Naive thymus-derived CD4-positive, alpha-beta T cell (primary cell): ENCODE measurements at regions of chr1 and their contacts with region 1.

Region 1: GRCh38 chr1:9823943-9824701 is at the start of gene CLSTN1:
- DNase-seq: peak; percentile 73 to 88 (median 84)
- ATAC-seq: peak; percentile 86
- H3K4me3 ChIP-seq: peak within 1 kb of the TSS; percentile 82
- H3K4me3 Mint-ChIP-seq: peak within 1 kb of the TSS; percentile 95 to 99 (median 98)
- H3K27ac ChIP-seq: peak within 1 kb of the TSS; percentile 68
- H3K27ac Mint-ChIP-seq: peak within 1 kb of the TSS; percentile 80 to 97 (median 93)
- H3K4me1 ChIP-seq: peaks cover 24 to 34% of the 10 kb centered on the region in 2 donors
- H3K4me1 Mint-ChIP-seq: peaks cover 31 to 52% (median 46%) of the 10 kb centered on the region in 7 donors
- H3K27me3 ChIP-seq: no peaks in the 10 kb centered on the region
- H3K27me3 Mint-ChIP-seq: peaks cover 0 to 3% (median 0%) of the 10 kb centered on the region in 5 donors
- total RNA-seq, gene CLSTN1: 68.6 to 116 (median 85.6) TPM

Region 2: DNA sequence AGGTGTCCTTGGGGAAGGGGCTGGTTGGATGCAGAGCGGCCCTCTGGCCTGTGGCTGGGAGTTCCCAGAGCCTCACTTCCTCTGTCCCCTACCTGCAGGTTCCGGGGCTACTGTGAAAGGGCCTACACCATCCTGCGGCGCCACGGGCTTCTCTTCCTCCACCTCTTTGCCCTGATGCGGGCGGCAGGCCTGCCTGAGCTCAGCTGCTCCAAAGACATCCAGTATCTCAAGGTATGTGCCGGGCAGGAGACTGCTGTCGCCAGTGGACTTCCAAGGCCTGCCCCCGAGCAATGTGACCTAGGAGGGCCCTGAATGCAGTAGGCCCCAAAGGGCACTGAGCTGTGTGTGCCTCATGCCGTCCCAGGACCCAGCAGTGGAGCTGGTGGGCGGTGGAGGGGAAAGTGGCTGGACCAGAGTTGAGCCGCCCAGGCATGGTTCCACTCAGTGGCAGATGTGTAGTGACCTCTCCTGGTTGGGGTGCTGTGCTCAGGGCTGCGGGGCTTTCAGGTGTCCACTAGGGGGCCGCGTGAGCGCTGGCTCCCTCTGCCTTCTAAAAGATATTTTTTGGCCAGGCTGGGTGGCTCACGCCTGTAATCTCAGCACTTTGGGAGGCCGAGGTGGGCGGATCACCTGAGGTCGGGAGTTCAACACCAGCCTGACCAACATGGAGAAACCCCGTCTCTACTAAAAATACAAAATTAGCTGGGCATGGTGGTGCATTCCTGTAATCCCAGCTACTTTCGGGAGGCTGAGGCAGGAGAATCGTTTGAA is 99.2 kb before region 1 on chr1:
- CTCF ChIA-PET with region 1: no interaction called
- POLR2A ChIA-PET with region 1: interaction called, 4 read pairs
- intact Hi-C with region 1: loop called in 1 of 2 experiments (anchors 2 kb)
- DNase-seq: peak; percentile 58 to 72 (median 64)
- ATAC-seq: peak; percentile 65
- H3K4me3 ChIP-seq: no peak overlapping the region
- H3K4me3 Mint-ChIP-seq: peak overlapping the region in 8 of 10 donors; percentile 14 to 68 (median 62)
- H3K27ac ChIP-seq: peak overlapping the region; percentile 51
- H3K27ac Mint-ChIP-seq: peak overlapping the region; percentile 73 to 88 (median 80)
- H3K4me1 ChIP-seq: peaks cover 36 to 83% of the 10 kb centered on the region in 2 donors
- H3K4me1 Mint-ChIP-seq: peaks cover 38 to 84% (median 60%) of the 10 kb centered on the region in 7 donors
- H3K27me3 ChIP-seq: no peaks in the 10 kb centered on the region
- H3K27me3 Mint-ChIP-seq: no peaks in the 10 kb centered on the region

Region 3: GRCh38 chr1:9784508-9785133 is 39.5 kb before region 1 on chr1:
- CTCF ChIA-PET with region 1: no interaction called
- POLR2A ChIA-PET with region 1: interaction called, 4 read pairs
- intact Hi-C with region 1: loop called (anchors 1 kb)
- DNase-seq: peak; percentile 29 to 78 (median 71)
- ATAC-seq: peak; percentile 65
- H3K4me3 ChIP-seq: no peak overlapping the region
- H3K4me3 Mint-ChIP-seq: peak overlapping the region in 2 of 10 donors; percentile 28 to 38
- H3K27ac ChIP-seq: no peak overlapping the region
- H3K27ac Mint-ChIP-seq: peak overlapping the region in 5 of 9 donors; percentile 23 to 76 (median 49)
- H3K4me1 ChIP-seq: peaks cover 11 to 17% of the 10 kb centered on the region in 2 donors
- H3K4me1 Mint-ChIP-seq: peaks cover 11 to 41% (median 32%) of the 10 kb centered on the region in 7 donors
- H3K27me3 ChIP-seq: no peaks in the 10 kb centered on the region
- H3K27me3 Mint-ChIP-seq: no peaks in the 10 kb centered on the region

Region 4: GRCh38 chr1:9798236-9799130 is 25.6 kb before region 1 on chr1:
- CTCF ChIA-PET with region 1: no interaction called
- POLR2A ChIA-PET with region 1: no interaction called
- intact Hi-C with region 1: loop called (anchors 1 to 2 kb)
- DNase-seq: no peak
- ATAC-seq: no peak
- H3K4me3 ChIP-seq: no peak overlapping the region
- H3K4me3 Mint-ChIP-seq: peak overlapping the region; percentile 14 to 64 (median 30)
- H3K27ac ChIP-seq: no peak overlapping the region
- H3K27ac Mint-ChIP-seq: peak overlapping the region; percentile 9 to 87 (median 68)
- H3K4me1 ChIP-seq: peaks cover 9 to 25% of the 10 kb centered on the region in 2 donors
- H3K4me1 Mint-ChIP-seq: peaks cover 48 to 84% (median 73%) of the 10 kb centered on the region in 7 donors
- H3K27me3 ChIP-seq: no peaks in the 10 kb centered on the region
- H3K27me3 Mint-ChIP-seq: no peaks in the 10 kb centered on the region

Region 5: DNA sequence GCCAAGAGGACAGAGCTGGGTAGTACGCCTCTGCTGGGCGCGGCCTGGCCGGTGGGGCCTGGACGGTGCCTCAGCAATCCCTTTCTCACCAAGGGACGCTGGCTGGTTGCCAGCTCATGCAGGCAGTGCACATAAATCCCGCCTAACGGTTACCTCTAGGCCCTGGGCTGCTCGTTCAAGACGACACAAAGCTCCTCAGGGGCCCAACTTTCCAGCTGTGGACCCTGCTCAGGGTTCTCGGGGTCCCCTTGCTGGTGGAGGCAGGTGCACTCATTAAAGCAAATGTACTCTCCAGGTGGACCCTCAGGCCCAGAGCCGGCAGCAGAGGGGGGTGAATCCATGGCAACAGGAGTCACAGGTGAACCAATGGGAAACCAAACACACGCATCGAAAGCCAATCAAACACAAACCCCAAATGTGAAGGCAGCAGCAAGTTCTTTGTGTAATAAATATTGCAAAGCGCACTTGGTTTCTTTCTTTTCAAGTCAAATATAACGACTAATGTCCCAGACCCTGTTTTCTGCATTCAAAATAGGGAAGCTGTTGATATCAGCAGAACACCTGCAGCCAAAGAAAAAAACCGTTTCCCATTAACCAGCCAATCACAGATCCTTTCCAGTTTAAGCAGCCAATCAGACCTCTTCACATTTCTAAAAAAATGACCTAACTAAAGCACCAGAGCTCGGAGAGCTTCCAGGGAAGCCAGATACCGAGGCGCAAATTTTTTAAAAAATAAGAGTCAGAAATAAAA is 25.7 kb after region 1 on chr1:
- CTCF ChIA-PET with region 1: interaction called, 3 read pairs
- POLR2A ChIA-PET with region 1: interaction called, 6 read pairs
- intact Hi-C with region 1: loop called in 1 of 2 experiments (anchors 2 kb)
- DNase-seq: peak in 7 of 9 donors; percentile 57 to 76 (median 64)
- ATAC-seq: peak; percentile 80
- H3K4me3 ChIP-seq: peak overlapping the region; percentile 27
- H3K4me3 Mint-ChIP-seq: peak overlapping the region; percentile 74 to 92 (median 84)
- H3K27ac ChIP-seq: no peak overlapping the region
- H3K27ac Mint-ChIP-seq: peak overlapping the region in 6 of 9 donors; percentile 1 to 87 (median 54)
- H3K4me1 ChIP-seq: peaks cover 0 to 5% of the 10 kb centered on the region in 2 donors
- H3K4me1 Mint-ChIP-seq: peaks cover 6 to 14% (median 10%) of the 10 kb centered on the region in 7 donors
- H3K27me3 ChIP-seq: no peaks in the 10 kb centered on the region
- H3K27me3 Mint-ChIP-seq: peaks cover 0 to 9% (median 0%) of the 10 kb centered on the region in 5 donors

Region 6: DNA sequence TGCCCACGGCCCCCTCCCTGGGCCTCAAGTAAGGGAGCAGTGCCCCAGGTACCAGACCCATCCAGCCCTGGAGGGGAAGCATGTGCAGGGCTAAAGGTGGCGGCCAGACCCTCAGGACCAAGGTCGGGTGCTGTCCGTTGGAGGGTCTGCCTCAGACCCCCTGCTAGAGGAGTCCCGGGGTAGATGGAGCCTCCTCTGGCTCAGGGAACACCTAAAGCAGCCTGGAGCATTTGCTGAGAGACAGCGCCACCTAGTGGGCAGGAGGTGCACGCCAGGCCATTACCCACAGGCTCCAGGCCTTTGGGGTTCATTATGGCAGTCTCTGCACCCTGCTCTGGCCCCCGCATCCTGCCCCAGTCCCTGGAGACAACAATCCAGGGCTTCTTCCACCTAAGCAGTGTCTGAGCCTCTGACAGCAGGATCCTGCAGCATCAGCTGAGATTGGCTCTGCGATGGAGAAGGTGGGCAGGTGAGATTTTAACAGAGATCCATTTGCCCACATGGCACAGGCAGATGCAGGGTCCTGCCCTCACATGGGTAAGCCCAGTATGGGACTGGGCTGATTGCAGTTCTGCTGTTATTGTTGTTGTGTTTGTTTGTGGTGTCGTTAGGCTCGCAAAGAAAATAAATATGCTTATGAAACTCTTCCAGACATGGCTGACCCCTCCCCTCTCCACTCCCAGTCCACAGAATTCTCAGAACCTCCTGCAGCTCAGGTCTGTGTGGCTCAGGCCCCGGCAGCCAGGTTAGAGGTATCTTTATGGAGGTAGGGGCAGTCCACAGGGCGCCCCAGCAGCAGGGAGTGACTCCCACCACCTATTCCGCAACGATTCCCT is 43.5 kb after region 1 on chr1:
- CTCF ChIA-PET with region 1: interaction called, 3 read pairs
- POLR2A ChIA-PET with region 1: no interaction called
- intact Hi-C with region 1: loop called (anchors 1 to 2 kb)
- DNase-seq: peak; percentile 70 to 90 (median 84)
- ATAC-seq: peak; percentile 96
- H3K4me3 ChIP-seq: no peak overlapping the region
- H3K4me3 Mint-ChIP-seq: no peak overlapping the region
- H3K27ac ChIP-seq: no peak overlapping the region
- H3K27ac Mint-ChIP-seq: no peak overlapping the region
- H3K4me1 ChIP-seq: no peaks in the 10 kb centered on the region
- H3K4me1 Mint-ChIP-seq: peaks cover 0 to 7% (median 3%) of the 10 kb centered on the region in 7 donors
- H3K27me3 ChIP-seq: no peaks in the 10 kb centered on the region
- H3K27me3 Mint-ChIP-seq: no peaks in the 10 kb centered on the region

Region 7: GRCh38 chr1:10338047-10338446 is 513.9 kb after region 1 on chr1:
- CTCF ChIA-PET with region 1: no interaction called
- POLR2A ChIA-PET with region 1: no interaction called
- intact Hi-C with region 1: no loop called
- DNase-seq: peak in 5 of 9 donors; percentile 1 to 27 (median 9)
- ATAC-seq: no peak
- H3K4me3 ChIP-seq: no peak overlapping the region
- H3K4me3 Mint-ChIP-seq: no peak overlapping the region
- H3K27ac ChIP-seq: no peak overlapping the region
- H3K27ac Mint-ChIP-seq: no peak overlapping the region
- H3K4me1 ChIP-seq: no peaks in the 10 kb centered on the region
- H3K4me1 Mint-ChIP-seq: no peaks in the 10 kb centered on the region
- H3K27me3 ChIP-seq: no peaks in the 10 kb centered on the region
- H3K27me3 Mint-ChIP-seq: no peaks in the 10 kb centered on the region